Activated T-helper 1 cell treated with anti-CD3 and anti-CD28 coated beads, Interleukin-12 subunit alpha, Interleukin-12 subunit beta, Interleukin-2, Interleukin-4 antibody, amounts not matched to agents 30 ng/mL and 10 ng/mL and 1 ng/mL, durations not matched to agents 14 hours and 24 hours and 36 hours (primary cell): ENCODE measurements at regions of chr6 and their contacts with region 1.

Region 1: GRCh38 chr6:168895102-168895812 is 358.4 kb downstream of the THBS2 start:
- DNase-seq: peak; percentile 53
- H3K4me3 Mint-ChIP-seq: peak overlapping the region; percentile 41
- H3K27ac Mint-ChIP-seq: no peak overlapping the region
- H3K4me1 Mint-ChIP-seq: peaks cover 8% of the 10 kb centered on the region
- H3K27me3 Mint-ChIP-seq: peaks cover 4% of the 10 kb centered on the region

Region 2: DNA sequence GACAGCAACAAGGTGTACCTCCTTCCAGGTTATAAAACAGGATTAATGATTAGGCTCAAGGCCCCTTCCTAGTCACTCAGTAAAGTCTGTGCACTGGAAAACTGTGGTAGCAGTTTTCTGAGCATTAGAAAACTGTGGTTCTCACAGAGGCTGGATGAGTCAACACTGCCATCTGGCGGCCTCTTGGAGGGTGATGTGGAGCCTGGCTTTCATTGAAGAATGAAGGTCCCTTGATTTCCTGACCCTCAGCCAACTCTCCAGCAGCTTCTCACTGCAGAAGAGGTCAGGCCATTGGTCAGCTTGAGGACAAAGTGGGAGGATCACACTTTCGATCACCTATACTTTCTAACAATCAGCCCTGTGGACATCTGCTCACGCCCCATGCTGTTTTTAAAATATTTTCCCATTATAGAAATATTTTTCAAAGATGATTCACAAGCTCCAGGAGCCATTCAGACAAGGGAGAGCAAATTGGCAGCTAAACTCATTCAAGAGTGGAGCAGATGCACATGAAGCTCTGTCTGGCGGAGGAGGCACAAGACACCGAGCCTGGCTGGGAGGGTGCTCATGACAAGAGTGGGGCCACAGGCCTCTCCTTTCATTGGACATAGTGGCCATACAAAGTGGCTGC is 1634.7 kb after region 1 on chr6:
- intact Hi-C with region 1: loop called (anchors 1 kb)
- DNase-seq: peak; percentile 43
- H3K4me3 Mint-ChIP-seq: no peak overlapping the region
- H3K27ac Mint-ChIP-seq: no peak overlapping the region
- H3K4me1 Mint-ChIP-seq: no peaks in the 10 kb centered on the region
- H3K27me3 Mint-ChIP-seq: peaks cover 3% of the 10 kb centered on the region